ENCODE measurements at regions of chrX and their contacts with region 1.

Region 1: GRCh38 chrX:45322382-45322781 is 121.7 kb upstream of the DIPK2B start:
- DNase-seq: peak; percentile 64
- H3K4me3 ChIP-seq: no peak overlapping the region
- H3K27ac ChIP-seq: no peak overlapping the region
- H3K4me1 ChIP-seq: peaks cover 0 to 7% (median 3%) of the 10 kb centered on the region in 4 donors
- H3K27me3 ChIP-seq: no peaks in the 10 kb centered on the region
- CTCF ChIP-seq: peak in 3 of 4 experiments; percentile 26 to 31 (median 28)
- EP300 ChIP-seq: no peak
- POLR2A ChIP-seq: no peak

Region 2: DNA sequence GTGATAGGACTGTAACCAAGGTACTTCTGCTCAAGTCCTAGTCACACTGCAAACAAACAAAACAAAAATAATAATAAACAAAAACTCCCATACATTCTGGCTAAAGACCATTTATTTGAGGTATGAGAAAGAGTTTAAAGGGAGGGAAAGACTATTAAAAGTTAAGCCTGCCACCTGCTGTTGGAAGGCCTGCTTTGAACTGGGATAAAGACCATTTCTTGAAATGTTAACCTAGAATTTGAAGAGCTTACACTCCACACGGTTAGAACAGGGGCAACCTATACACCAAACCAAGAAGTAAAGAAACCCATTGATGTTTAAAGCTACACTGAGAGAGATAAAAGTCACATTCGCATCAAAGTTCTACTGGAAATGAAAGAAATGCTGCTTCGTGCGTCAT is 427.0 kb after region 1 on chrX:
- intact Hi-C with region 1: loop called (anchors 5 kb)
- DNase-seq: no peak
- H3K4me3 ChIP-seq: no peak overlapping the region
- H3K27ac ChIP-seq: peak overlapping the region in 2 of 4 donors; percentile 56 to 60
- H3K4me1 ChIP-seq: peaks cover 0 to 29% (median 9%) of the 10 kb centered on the region in 4 donors
- H3K27me3 ChIP-seq: no peaks in the 10 kb centered on the region
- CTCF ChIP-seq: peak in 1 of 4 experiments; percentile 6
- EP300 ChIP-seq: no peak
- POLR2A ChIP-seq: no peak

Region 3: DNA sequence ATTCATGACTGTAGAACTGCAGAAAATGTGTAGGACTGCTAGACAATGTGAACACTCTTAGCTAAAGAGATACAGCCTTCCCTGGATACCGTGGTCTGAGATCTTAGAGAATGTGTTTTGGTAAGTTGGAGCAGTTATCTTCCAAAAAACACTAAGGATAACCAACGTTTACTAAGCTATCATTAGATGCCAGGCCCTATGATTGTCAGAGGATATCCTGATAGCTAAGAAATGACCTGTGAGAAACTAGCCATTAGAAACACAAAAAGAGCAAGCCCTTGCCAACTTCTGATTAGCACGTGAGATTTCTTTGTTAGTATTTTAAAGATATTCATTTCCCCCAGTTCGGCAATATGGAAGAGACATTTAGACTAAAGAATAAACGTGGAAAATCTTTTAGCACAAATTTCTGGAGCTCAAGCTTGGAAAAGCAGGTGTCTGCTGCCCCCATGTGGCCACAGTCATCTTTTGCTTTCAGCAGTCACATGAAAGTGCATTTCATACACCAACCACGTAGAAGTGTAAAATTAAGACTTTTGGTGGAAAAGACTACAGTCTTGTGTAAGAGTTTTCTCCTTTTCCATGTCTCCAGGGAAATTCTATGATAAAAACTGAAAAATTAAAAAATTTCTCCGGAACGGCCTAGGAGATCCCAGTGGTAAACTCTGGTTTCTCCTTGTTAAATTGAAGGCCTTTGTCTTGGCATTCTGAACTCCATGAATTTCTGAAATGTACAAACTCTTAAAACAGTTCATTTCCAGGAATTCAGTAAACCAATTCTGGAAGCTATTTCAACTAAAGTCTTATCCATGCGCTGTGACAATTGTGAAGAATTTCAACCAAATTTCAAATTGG is 1086.4 kb after region 1 on chrX:
- intact Hi-C with region 1: loop called (anchors 1 kb)
- DNase-seq: peak; percentile 80
- H3K4me3 ChIP-seq: no peak overlapping the region
- H3K27ac ChIP-seq: no peak overlapping the region
- H3K4me1 ChIP-seq: no peaks in the 10 kb centered on the region
- H3K27me3 ChIP-seq: no peaks in the 10 kb centered on the region
- CTCF ChIP-seq: peak; percentile 43 to 59 (median 50)
- EP300 ChIP-seq: no peak
- POLR2A ChIP-seq: no peak

Measured in sigmoid colon (tissue), 7 donors.